CD4-positive, alpha-beta memory T cell (primary cell): ENCODE measurements at regions of chr6 and their contacts with region 1.

Region 1: GRCh38 chr6:26216356-26216885 is 129.2 kb downstream of the HFE start:
- DNase-seq: peak; percentile 88 to 96 (median 94)
- H3K4me3 ChIP-seq: peak overlapping the region; percentile 75 to 85
- H3K4me3 Mint-ChIP-seq: no peak overlapping the region
- H3K27ac ChIP-seq: peak overlapping the region; percentile 82
- H3K27ac Mint-ChIP-seq: no peak overlapping the region
- H3K4me1 ChIP-seq: peaks cover 26% of the 10 kb centered on the region
- H3K4me1 Mint-ChIP-seq: peaks cover 0 to 5% (median 2%) of the 10 kb centered on the region in 4 donors
- H3K27me3 ChIP-seq: no peaks in the 10 kb centered on the region
- H3K27me3 Mint-ChIP-seq: no peaks in the 10 kb centered on the region

Region 2: DNA sequence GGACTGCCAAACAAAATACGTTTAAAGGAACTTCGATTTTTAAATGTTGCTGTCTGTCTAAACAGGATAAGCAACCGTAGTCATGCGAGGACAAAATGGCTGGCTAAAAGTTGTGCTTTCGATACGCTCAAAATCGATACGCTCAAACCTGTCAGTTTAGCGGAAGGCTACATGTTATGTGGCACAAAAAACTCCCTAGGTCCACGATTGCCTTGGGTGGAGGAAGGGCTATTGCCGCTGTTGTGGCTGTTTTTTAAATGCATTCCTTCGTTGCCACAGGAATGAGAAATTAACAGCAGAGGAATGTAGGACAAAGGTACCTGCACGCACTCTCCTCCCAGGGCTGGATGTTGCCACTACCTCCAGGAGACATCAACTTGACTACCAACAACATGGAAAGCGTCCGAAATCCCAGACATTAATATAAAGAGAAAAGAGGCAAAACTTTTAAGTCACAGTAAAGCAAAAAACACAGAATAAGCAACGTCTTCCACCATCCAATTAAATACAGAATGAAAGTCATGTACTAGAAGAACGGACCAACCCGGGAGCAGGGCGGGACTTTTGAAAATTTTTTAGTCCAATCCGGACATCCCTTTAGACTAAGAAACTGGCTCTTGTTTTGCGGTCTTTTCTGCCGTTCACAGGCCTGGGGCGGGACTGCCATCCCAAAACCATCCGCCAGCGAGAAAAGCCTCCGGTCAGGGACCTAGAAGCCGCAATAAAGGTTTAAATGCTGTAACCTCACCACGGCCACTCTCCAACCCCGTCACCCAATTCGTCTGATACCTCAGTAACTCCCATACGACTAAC is 161.4 kb before region 1 on chr6:
- CTCF ChIA-PET with region 1: no interaction called
- POLR2A ChIA-PET with region 1: interaction called, 29 read pairs
- intact Hi-C with region 1: no loop called
- DNase-seq: peak; percentile 89 to 96 (median 91)
- H3K4me3 ChIP-seq: peak overlapping the region; percentile 67 to 78
- H3K4me3 Mint-ChIP-seq: peak overlapping the region; percentile 93 to 96 (median 94)
- H3K27ac ChIP-seq: peak overlapping the region; percentile 84
- H3K27ac Mint-ChIP-seq: peak overlapping the region; percentile 91 to 98 (median 98)
- H3K4me1 ChIP-seq: peaks cover 24% of the 10 kb centered on the region
- H3K4me1 Mint-ChIP-seq: peaks cover 7 to 34% (median 15%) of the 10 kb centered on the region in 4 donors
- H3K27me3 ChIP-seq: no peaks in the 10 kb centered on the region
- H3K27me3 Mint-ChIP-seq: no peaks in the 10 kb centered on the region

Region 3: GRCh38 chr6:26183581-26184366 is 32.6 kb before region 1 on chr6:
- CTCF ChIA-PET with region 1: interaction called, 14 read pairs
- POLR2A ChIA-PET with region 1: interaction called, 1,953 read pairs
- intact Hi-C with region 1: loop called (anchors 1 kb)
- DNase-seq: peak; percentile 72 to 81 (median 79)
- H3K4me3 ChIP-seq: peak overlapping the region; percentile 2 to 69
- H3K4me3 Mint-ChIP-seq: peak overlapping the region; percentile 90 to 100 (median 96)
- H3K27ac ChIP-seq: peak overlapping the region; percentile 67
- H3K27ac Mint-ChIP-seq: peak overlapping the region; percentile 78 to 99 (median 95)
- H3K4me1 ChIP-seq: peaks cover 45% of the 10 kb centered on the region
- H3K4me1 Mint-ChIP-seq: peaks cover 29 to 54% (median 37%) of the 10 kb centered on the region in 4 donors
- H3K27me3 ChIP-seq: no peaks in the 10 kb centered on the region
- H3K27me3 Mint-ChIP-seq: no peaks in the 10 kb centered on the region

Region 4: GRCh38 chr6:26249957-26250697 is 33.7 kb after region 1 on chr6:
- CTCF ChIA-PET with region 1: interaction called, 3 read pairs
- POLR2A ChIA-PET with region 1: interaction called, 16 read pairs
- intact Hi-C with region 1: loop called (anchors 1 kb)
- DNase-seq: peak; percentile 79 to 88 (median 83)
- H3K4me3 ChIP-seq: peak overlapping the region; percentile 86 to 88
- H3K4me3 Mint-ChIP-seq: peak overlapping the region; percentile 92 to 99 (median 98)
- H3K27ac ChIP-seq: peak overlapping the region; percentile 59
- H3K27ac Mint-ChIP-seq: peak overlapping the region; percentile 85 to 97 (median 94)
- H3K4me1 ChIP-seq: peaks cover 25% of the 10 kb centered on the region
- H3K4me1 Mint-ChIP-seq: peaks cover 28 to 53% (median 40%) of the 10 kb centered on the region in 4 donors
- H3K27me3 ChIP-seq: no peaks in the 10 kb centered on the region
- H3K27me3 Mint-ChIP-seq: no peaks in the 10 kb centered on the region

Region 5: DNA sequence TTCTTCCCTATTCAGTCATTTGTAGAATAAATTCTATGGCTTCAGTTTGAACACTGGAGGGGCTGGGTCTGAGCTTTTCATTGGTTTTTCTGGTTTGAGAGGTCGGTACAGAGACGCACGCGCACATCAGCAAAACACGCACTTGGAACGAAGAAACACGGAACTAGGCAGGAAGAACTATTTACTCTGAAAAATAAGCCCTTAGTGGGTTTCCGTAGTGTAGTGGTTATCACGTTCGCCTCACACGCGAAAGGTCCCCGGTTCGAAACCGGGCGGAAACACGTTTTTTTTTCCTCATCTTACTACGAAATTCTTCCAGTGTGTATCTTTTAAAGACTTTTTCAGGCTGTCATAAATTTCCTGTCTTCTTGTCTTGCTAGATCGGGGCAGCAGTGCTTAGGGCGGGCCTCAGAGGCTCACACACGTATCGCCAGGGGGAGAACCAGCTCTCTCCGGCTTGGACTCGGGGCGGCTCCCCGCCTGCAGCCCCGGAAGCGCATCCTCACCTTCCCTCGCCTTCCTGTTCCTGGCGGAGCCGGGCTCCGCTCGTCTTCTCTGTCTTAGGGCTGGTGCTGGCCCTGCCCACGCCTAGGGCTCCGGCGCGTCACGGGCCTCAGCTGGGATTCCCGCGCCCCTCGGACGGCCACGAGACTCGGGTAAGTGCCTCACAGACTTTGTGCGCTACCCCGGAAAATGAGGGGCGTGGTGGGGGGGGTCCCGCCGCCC is 321.6 kb after region 1 on chr6 and contains the start of gene HMGN4:
- CTCF ChIA-PET with region 1: no interaction called
- POLR2A ChIA-PET with region 1: interaction called, 15 read pairs
- intact Hi-C with region 1: no loop called
- DNase-seq: peak; percentile 92 to 96 (median 95)
- H3K4me3 ChIP-seq: peak within 1 kb of the TSS; percentile 83 to 90
- H3K4me3 Mint-ChIP-seq: peak within 1 kb of the TSS; percentile 89 to 98 (median 93)
- H3K27ac ChIP-seq: peak within 1 kb of the TSS; percentile 90
- H3K27ac Mint-ChIP-seq: peak within 1 kb of the TSS; percentile 94 to 99 (median 97)
- H3K4me1 ChIP-seq: peaks cover 66% of the 10 kb centered on the region
- H3K4me1 Mint-ChIP-seq: peaks cover 38 to 76% (median 56%) of the 10 kb centered on the region in 4 donors
- H3K27me3 ChIP-seq: no peaks in the 10 kb centered on the region
- H3K27me3 Mint-ChIP-seq: peaks cover 3 to 6% of the 10 kb centered on the region in 2 donors
- total RNA-seq, gene HMGN4: 102 to 105 TPM

Region 6: GRCh38 chr6:27825025-27825793 is 1608.8 kb after region 1 on chr6:
- CTCF ChIA-PET with region 1: no interaction called
- POLR2A ChIA-PET with region 1: interaction called, 12 read pairs
- intact Hi-C with region 1: no loop called
- DNase-seq: no peak
- H3K4me3 ChIP-seq: peak overlapping the region; percentile 62 to 79
- H3K4me3 Mint-ChIP-seq: peak overlapping the region; percentile 88 to 98 (median 92)
- H3K27ac ChIP-seq: peak overlapping the region; percentile 66
- H3K27ac Mint-ChIP-seq: peak overlapping the region; percentile 91 to 100 (median 98)
- H3K4me1 ChIP-seq: peaks cover 29% of the 10 kb centered on the region
- H3K4me1 Mint-ChIP-seq: peaks cover 16 to 43% (median 31%) of the 10 kb centered on the region in 4 donors
- H3K27me3 ChIP-seq: no peaks in the 10 kb centered on the region
- H3K27me3 Mint-ChIP-seq: no peaks in the 10 kb centered on the region